Activated naive CD4-positive, alpha-beta T cell treated with anti-CD3 and anti-CD28 coated beads for 36 hours (primary cell): ENCODE measurements at regions of chr1 and their contacts with region 1.

Region 1: GRCh38 chr1:32215629-32216480 is 6.3 kb downstream of the TMEM234 start:
- DNase-seq: peak; percentile 77
- H3K4me3 Mint-ChIP-seq: no peak overlapping the region
- H3K27ac Mint-ChIP-seq: no peak overlapping the region
- H3K4me1 Mint-ChIP-seq: peaks cover 14% of the 10 kb centered on the region
- H3K27me3 Mint-ChIP-seq: no peaks in the 10 kb centered on the region

Region 2: DNA sequence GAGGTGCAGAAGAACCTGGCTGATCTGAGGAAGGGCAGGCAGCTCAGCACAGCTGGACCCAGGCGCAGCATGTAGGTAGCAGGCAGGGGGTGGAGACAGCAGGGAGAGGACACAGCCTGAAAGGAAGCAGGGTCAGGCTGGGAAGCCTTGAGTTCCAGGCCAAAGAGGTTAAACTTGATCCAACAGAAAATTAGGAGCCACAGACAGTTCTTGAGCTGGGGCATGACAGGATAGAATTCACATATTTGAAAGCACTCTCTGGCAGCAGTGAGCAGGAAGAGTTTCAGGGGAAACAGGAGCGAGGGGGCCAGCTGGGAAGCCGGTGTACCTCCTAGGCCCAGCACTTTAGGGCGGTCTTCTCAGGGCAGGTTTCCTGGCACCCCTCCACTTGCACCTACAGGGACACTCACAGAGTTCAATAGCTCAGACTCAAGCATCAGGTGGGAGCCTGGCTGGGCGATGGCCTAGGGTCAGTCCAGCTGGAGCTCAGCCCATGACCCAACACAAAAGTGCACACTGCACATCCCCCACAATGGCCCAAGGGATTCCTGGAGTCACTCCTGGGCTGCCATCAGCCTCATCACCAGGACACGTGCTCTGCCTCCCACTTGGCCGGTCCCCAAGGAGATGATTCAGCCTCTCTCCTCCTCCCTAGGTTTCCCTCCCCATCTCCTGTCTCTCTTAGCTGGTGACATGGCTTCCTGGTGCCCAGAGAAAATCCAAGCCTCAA is 1515.2 kb before region 1 on chr1:
- CTCF ChIA-PET with region 1: no interaction called
- intact Hi-C with region 1: no loop called
- DNase-seq: no peak
- H3K4me3 Mint-ChIP-seq: no peak overlapping the region
- H3K27ac Mint-ChIP-seq: no peak overlapping the region
- H3K4me1 Mint-ChIP-seq: no peaks in the 10 kb centered on the region
- H3K27me3 Mint-ChIP-seq: no peaks in the 10 kb centered on the region

Region 3: DNA sequence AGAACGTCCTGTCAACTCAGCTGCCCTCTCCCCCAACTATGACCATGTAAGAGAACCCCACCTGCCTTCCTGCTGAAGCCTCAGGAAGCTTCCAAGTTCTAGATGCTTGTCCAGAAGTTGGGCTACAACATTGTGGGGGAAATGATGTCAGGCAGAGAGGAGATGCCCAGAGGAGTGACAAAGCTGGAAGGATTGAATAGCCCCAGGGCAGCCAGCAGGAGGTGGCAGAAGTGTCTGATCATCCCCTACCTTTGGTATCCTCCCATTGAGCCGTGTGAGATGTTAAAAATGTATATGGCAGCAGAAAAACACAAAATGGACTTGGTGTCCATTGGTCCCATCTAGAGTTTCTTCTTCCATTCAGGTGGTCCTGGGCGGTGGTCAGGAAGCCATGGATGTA is 12.9 kb after region 1 on chr1:
- CTCF ChIA-PET with region 1: interaction called, 16 read pairs
- intact Hi-C with region 1: no loop called
- DNase-seq: no peak
- H3K4me3 Mint-ChIP-seq: no peak overlapping the region
- H3K27ac Mint-ChIP-seq: no peak overlapping the region
- H3K4me1 Mint-ChIP-seq: peaks cover 19% of the 10 kb centered on the region
- H3K27me3 Mint-ChIP-seq: no peaks in the 10 kb centered on the region

Region 4: GRCh38 chr1:32286763-32287162 is 70.9 kb after region 1 on chr1:
- CTCF ChIA-PET with region 1: interaction called, 18 read pairs
- intact Hi-C with region 1: loop called (anchors 1 kb)
- DNase-seq: no peak
- H3K4me3 Mint-ChIP-seq: no peak overlapping the region
- H3K27ac Mint-ChIP-seq: peak overlapping the region; percentile 17
- H3K4me1 Mint-ChIP-seq: peaks cover 14% of the 10 kb centered on the region
- H3K27me3 Mint-ChIP-seq: no peaks in the 10 kb centered on the region

Region 5: GRCh38 chr1:32321712-32322291 is 105.9 kb after region 1 on chr1:
- CTCF ChIA-PET with region 1: interaction called, 20 read pairs
- intact Hi-C with region 1: no loop called
- DNase-seq: peak; percentile 42
- H3K4me3 Mint-ChIP-seq: no peak overlapping the region
- H3K27ac Mint-ChIP-seq: peak overlapping the region; percentile 91
- H3K4me1 Mint-ChIP-seq: peaks cover 41% of the 10 kb centered on the region
- H3K27me3 Mint-ChIP-seq: no peaks in the 10 kb centered on the region

Region 6: GRCh38 chr1:32372149-32372756 is 156.4 kb after region 1 on chr1:
- CTCF ChIA-PET with region 1: interaction called, 10 read pairs
- intact Hi-C with region 1: no loop called
- DNase-seq: peak; percentile 55
- H3K4me3 Mint-ChIP-seq: no peak overlapping the region
- H3K27ac Mint-ChIP-seq: peak overlapping the region; percentile 21
- H3K4me1 Mint-ChIP-seq: peaks cover 16% of the 10 kb centered on the region
- H3K27me3 Mint-ChIP-seq: no peaks in the 10 kb centered on the region

Region 7: DNA sequence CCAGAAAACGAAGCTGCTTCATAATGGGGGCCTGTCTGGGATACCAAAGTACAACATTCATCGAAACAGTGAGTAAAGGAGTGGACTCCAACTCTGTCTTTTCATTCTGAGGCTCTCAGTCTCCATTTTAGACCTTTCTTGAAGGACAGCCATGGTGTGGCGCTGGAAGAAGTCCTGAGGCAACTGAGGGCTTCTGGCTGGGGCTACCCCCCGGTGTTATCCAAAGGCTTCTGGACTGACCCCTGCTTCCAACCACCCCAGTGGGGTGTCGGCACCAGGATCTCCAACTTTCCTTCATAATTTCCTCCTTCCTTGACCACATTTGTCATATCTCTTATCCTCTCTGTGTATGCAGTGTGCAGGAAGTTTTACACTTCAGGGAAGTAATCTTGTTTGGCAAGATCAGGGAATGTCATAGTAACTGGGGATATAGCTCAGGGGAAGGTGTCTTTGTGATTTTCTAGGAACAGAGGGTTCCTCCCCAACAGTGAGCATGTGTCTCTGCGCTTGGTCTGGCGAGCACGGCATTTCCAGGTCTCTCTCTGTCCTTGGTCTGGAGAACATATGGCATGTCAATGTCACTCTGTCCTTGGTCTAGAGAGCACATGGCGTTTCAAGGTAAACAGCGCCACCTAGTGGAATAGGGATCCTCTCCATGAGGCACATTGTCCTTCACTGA is 197.8 kb after region 1 on chr1:
- CTCF ChIA-PET with region 1: interaction called, 17 read pairs
- intact Hi-C with region 1: loop called (anchors 1 kb)
- DNase-seq: peak; percentile 84
- H3K4me3 Mint-ChIP-seq: no peak overlapping the region
- H3K27ac Mint-ChIP-seq: no peak overlapping the region
- H3K4me1 Mint-ChIP-seq: peaks cover 3% of the 10 kb centered on the region
- H3K27me3 Mint-ChIP-seq: peaks cover 7% of the 10 kb centered on the region